ENCODE measurements at regions of chr16 and their contacts with region 1.

Region 1: DNA sequence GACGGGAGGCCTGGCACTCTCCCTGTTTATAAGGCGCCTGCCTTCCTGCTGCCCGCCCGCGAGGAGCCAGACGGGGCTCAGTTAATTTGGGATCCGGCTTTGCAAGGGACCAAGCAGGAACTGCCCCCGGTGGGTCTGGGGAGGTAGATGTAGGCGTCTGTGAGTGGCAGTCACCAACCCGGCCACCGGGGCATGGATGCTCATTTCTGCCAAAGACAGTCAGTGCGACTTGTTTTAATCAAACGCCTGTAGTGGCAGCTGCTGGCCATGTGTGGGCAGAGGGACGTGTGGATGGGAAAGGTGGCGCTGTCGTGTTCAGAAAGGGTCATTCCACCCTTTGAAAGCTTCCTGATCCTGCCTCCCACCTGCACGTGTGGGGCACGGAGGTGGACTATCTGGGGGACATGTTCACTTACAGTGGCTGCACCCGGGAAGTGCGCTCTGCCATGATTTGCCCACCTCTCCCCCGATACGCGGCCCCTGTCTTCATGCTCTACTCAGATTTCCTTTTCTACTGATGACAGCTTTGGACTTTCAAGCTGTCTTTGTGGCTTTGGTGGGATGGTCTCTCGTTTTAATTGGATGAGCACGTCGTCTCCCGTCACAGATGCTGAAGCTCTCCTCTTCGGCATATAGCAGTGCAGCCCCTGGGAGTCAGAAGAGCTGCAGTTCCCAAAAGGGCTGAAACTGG is 60.3 kb upstream of the CIBAR2 start:
- DNase-seq: no peak
- ATAC-seq: peak; percentile 30

Region 2: DNA sequence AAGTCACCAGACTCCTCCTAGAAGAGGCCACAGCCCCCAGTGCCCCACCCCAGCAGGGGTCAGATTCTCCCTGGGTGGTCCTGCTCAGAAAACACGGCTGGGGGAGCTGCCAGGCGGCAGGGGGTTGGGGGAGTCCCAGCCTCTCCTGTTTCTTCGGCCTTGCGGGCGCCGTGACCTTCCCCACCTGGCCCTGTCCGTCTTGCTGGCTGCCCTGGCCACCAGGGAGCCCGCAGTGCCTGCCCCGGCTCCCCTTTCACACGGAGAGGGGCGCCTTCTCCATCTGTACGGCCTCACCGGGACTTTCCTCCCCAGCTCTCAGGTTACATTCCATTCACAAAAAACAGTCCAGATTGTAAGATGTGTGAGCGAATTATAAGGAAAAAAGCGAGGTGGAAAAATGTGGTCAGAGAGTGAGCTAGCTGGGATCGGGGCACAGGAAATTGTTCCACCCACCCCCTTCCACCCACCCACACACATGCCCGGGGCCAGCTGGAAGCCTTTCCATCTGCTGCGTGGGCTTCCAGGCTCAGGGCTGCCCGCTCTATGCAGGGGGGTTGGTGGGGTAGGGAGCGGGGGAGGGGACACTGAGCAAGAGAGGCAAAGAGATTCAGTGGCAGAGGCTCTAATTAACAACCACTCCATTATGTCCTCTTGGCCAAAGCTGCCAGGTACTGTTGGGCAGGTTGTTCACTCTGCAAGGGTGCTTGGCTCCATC is 45.7 kb before region 1 on chr16:
- intact Hi-C with region 1: loop called (anchors 5 kb)
- DNase-seq: peak; percentile 31
- ATAC-seq: no peak

Region 3: DNA sequence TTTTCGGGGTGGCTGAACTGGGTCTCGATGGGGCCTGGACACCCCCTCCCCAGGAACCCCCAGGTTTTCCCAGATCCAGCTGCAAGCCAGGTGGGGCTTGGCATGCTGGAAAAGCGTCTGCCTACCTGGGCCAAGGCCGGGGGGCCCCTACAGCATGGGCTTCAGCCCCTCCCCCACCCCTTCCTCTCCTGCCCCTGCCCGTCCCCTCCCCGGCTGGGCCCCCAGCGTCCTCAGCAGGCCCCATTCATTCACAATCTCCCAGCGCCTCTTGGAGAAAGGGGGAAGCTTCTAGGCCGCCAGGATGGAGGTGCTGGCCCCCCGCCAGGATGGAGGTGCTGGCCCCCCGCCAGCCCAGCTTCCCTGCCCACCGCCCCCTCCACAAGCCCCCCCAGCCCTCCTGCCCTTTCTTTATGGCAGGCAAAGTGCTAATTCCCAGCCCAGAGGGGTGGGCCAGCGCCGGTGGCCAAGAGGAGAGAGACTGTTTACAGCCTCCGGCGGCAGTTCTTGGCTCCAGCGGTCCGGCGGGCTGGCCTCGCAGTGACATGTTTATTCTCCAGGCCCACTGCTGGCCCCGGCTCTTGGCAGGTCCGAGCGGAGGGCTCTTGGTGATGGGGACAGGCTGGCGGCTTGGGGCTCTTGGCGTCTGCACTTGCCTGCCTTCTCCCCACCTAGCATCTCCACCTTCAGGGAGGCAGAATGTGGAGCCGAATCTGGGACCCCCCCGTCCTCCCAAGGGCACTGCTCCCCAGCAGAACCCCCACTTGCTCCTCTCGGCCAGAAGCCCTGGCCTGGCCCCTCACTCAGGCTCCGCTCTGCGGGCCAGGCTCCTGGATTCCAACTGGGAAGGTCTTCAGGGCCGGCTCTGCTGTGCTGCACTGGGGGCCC is 34.1 kb after region 1 on chr16:
- intact Hi-C with region 1: loop called (anchors 5 kb)
- DNase-seq: peak; percentile 89
- ATAC-seq: peak; percentile 51

Region 4: DNA sequence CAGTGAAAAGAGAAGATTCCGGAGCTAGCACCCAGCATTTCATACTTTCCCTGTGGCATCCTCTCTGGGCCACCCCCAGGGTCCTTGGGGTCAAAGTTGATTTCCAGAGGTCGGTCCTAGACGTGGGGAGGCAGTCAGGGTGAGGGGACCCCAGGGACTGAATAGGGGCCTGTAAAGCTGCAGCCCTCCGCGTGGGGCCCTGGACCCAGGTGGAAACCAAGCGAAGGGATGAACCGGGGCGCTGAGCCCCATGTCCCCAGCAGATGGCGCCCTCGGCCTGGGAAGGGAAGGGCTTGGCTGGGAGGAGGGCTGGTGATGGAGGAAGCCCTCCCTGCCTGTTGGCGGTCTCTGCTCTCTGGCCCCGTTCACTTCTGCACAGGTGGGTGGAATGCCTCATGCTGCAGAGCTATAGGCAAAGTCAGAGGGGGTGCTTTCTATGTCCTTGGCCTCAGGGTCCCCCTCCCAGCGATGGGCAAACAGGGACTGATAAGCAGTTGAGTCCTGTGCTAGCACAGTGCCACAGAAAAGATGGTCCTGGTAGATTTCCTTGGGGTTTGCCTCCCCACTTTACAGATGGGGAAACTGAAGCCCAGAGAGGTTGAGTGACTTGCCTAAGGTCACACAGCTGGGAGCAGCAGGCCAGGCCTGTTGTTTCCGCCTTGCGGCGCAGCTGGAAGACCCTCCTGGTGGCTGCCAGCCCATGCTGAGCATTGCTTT is 103.1 kb after region 1 on chr16:
- intact Hi-C with region 1: no loop called
- DNase-seq: peak; percentile 89
- ATAC-seq: peak; percentile 66

Region 5: DNA sequence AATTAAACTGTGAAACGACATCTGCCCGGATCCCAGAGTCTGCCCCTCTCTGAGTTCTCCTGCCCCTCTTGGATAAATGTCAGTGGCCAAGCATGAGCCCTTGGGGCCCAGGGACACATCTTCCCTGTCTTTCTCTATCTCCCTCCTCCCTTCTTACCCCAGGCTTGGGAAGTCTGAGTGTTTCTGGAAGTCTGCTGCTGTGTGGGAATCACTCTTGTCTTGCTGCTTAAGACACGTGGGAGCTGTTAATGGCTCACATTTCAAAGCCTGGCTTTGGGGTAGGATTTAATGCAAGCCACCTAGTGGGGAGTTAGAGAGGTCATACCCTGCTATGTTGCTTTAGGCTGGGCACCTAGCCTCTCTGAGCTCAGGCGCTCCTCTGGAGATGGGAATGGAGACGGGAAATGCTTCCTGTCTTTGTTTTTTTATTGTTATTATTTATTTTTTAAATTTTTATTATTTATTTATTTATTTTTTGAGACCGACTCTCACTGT is 158.1 kb after region 1 on chr16:
- intact Hi-C with region 1: no loop called
- DNase-seq: no peak
- ATAC-seq: peak; percentile 64

Measured in Right ventricle myocardium inferior (tissue), 1 donor.